GM18951 (cell line): ENCODE measurements at regions of chr1 and their contacts with region 1.

Region 1: GRCh38 chr1:179706339-179706941 is 36.7 kb upstream of the FAM163A start:
- POLR2A ChIP-seq: no peak

Region 2: GRCh38 chr1:179558078-179558477 is 148.4 kb before region 1 on chr1:
- in situ Hi-C with region 1: no loop called
- POLR2A ChIP-seq: no peak

Region 3: DNA sequence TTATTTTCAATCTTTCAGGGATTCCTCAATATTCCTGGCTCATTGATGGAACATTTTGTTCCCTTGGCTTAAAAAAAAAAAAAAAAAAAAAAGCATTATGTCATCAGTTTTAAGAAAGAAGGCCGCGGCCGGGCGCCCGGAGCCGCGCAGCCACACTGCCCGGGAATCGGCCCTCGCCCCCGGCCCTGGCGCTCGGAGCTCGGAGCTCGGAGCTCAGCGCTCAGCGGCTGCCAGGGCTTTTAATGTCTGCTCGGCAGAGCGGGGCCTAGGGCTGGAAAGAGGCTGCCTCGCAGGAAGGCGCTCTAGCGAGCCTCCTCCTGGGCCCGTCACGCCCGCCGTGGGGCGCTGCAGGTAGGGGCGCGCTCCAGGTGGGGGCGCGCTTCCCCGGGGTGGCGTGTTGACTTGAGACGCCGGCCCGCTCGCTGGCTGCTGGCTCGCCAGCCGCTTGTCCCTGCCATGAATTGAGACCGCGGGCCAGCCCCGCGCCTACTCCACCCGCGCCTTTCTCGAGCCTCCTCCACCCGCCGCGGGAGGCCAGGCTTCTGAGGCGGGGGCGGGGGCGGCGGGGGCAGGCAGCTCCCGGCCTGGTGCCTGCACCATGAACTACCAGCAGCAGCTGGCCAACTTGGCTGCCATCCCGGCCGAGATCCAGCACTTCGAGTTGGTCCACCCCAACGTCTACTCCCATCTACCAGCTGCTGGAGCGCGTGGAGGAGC is 120.2 kb before region 1 on chr1:
- in situ Hi-C with region 1: no loop called
- POLR2A ChIP-seq: no peak

Region 4: GRCh38 chr1:179809506-179810366 is 103.3 kb after region 1 on chr1:
- in situ Hi-C with region 1: loop called (anchors 10 kb)
- POLR2A ChIP-seq: no peak

Region 5: DNA sequence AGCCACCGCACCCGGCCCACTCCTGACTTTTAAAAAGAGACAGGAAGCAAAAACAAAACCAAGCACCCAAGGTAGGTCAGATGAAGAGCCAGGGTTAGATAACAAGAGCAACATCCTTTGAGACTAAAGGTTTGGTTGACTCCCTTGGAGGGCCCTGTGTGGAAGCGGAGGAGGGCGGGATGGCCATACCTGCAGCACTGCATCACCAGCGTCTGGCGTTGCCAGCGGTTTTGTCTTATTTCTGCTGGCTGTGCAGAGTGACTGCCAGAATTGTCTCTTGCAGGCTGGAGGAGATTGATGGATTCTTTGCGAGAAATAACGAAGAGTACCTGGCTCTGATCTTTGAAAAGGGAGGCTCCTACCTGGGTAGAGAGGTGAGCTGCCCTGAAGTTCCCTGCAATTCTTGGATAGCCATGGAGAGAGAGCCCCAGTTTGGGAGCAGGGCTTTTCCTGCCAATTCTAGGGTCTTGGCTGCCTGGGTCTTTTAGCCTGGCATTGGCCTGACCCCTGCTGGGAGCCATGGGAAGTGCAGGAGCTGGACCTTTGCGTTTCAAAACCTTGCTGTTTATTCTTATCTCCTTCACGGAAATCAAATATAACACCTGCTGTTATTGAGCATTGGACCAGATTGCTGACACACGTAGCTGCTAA is 472.2 kb after region 1 on chr1:
- in situ Hi-C with region 1: loop called (anchors 25 kb)
- POLR2A ChIP-seq: no peak